ENCODE measurements at regions of chr9 and their contacts with region 1.

Region 1: DNA sequence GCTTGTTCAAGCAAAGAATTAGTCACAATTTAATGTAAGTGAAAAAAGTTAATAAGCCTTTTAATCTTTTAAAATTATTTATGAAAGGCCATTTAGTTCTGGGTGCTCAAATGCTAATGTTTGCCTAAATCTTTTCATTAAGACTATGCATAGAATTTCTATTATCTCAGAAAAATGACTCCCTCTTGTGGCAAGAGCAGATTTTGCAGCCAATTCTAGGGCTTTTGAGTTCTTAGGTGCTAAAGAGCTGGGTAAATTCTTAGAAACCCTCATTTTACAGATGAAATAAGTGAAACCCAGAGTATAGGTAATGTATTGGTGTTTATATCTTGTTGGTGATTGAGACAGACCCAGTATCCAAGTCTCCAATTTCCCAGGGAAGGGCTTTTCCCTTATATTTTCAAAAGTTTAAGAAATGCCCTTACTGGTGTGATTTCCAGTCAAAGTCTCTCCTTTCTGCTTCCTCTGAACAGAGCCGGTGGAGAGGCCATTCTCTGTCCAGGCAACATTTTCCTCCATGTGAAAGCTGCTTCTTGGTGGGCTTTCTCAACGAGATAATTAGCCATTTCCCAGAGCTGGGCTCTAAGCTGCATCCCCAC is 24.1 kb upstream of the PCSK5 start:
- DNase-seq: peak in 1 of 2 donors; percentile 56
- ATAC-seq: peak in 1 of 8 donors; percentile 70
- H3K4me3 ChIP-seq: no peak overlapping the region
- H3K27ac ChIP-seq: no peak overlapping the region
- H3K4me1 ChIP-seq: peaks cover 0 to 19% (median 0%) of the 10 kb centered on the region in 9 donors
- H3K27me3 ChIP-seq: no peaks in the 10 kb centered on the region
- CTCF ChIP-seq: peak; percentile 62 to 89 (median 81)

Region 2: GRCh38 chr9:75200892-75201470 is 665.4 kb before region 1 on chr9:
- intact Hi-C with region 1: loop called in 3 of 10 experiments (anchors 5 to 10 kb)
- DNase-seq: no peak
- ATAC-seq: no peak
- H3K4me3 ChIP-seq: no peak overlapping the region
- H3K27ac ChIP-seq: no peak overlapping the region
- H3K4me1 ChIP-seq: peaks cover 0 to 8% (median 0%) of the 10 kb centered on the region in 9 donors
- H3K27me3 ChIP-seq: no peaks in the 10 kb centered on the region
- CTCF ChIP-seq: peak; percentile 47 to 75 (median 69)

Region 3: GRCh38 chr9:75333624-75334023 is 532.7 kb before region 1 on chr9:
- intact Hi-C with region 1: loop called in 3 of 10 experiments (anchors 5 to 10 kb)
- DNase-seq: no peak
- ATAC-seq: peak in 1 of 8 donors; percentile 49
- H3K4me3 ChIP-seq: no peak overlapping the region
- H3K27ac ChIP-seq: no peak overlapping the region
- H3K4me1 ChIP-seq: no peaks in the 10 kb centered on the region
- H3K27me3 ChIP-seq: no peaks in the 10 kb centered on the region
- CTCF ChIP-seq: peak; percentile 16 to 68 (median 47)

Region 4: GRCh38 chr9:75624998-75625397 is 241.4 kb before region 1 on chr9:
- intact Hi-C with region 1: loop called in 2 of 10 experiments (anchors 10 kb)
- DNase-seq: no peak
- ATAC-seq: peak in 5 of 8 donors; percentile 11 to 68 (median 17)
- H3K4me3 ChIP-seq: no peak overlapping the region
- H3K27ac ChIP-seq: no peak overlapping the region
- H3K4me1 ChIP-seq: peaks cover 0 to 9% (median 0%) of the 10 kb centered on the region in 9 donors
- H3K27me3 ChIP-seq: no peaks in the 10 kb centered on the region
- CTCF ChIP-seq: no peak

Region 5: GRCh38 chr9:76302947-76303940 is 436.9 kb after region 1 on chr9:
- intact Hi-C with region 1: loop called in 5 of 10 experiments (anchors 10 kb)
- DNase-seq: no peak
- ATAC-seq: peak in 4 of 8 donors; percentile 31 to 67 (median 48)
- H3K4me3 ChIP-seq: no peak overlapping the region
- H3K27ac ChIP-seq: no peak overlapping the region
- H3K4me1 ChIP-seq: peaks cover 0 to 5% (median 0%) of the 10 kb centered on the region in 9 donors
- H3K27me3 ChIP-seq: peaks cover 0 to 12% (median 5%) of the 10 kb centered on the region in 7 donors
- CTCF ChIP-seq: peak; percentile 62 to 80 (median 77)